Panc1 (cell line): ENCODE measurements at regions of chr17 and their contacts with region 1.

Region 1: DNA sequence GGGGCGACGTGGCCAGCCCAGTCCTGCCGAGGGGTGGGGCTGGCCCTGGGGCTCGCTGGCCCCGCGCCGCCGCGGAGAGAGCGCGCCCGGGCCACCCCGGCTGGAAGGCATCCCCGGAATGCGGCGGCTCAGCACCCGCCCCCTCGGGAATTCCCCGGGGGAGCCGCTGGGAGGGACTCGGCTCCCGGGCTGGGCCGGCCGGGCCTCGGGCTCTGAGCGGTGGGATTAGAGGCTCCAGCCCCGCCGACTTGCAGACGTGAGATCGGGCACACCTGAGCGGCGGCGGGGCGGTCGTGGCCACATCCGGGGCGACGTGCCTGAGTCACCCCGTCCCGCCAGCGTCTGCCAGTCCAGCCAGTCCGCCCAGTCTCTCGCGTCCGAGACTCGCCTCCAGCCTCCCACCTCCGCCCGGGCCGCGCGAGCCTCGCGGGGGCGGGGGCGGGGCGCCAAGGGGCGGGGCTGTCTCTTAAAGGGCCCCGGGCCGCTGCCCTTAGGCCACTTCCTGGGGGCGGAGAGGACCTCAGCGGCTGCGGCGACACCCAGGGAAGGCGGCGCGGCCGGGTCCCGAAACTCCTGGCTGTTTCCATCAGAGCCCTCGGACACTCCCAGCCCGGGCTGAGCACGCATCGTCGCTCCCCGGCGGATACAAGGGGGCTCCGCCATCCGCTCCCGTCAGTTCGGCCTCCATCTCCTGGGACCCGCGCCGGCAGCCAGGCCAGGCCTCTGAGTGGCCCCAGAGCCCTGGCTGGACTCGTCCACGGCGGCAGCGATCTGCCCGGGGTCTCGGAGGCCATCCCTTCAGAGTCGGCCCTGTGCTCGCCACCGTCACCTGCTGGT is at the start of gene KCTD11:
- DNase-seq: no peak
- ATAC-seq: peak; percentile 75
- H3K4me3 ChIP-seq: peak within 1 kb of the TSS; percentile 69 to 78
- H3K27ac ChIP-seq: peak within 1 kb of the TSS; percentile 92
- H3K4me1 ChIP-seq: peaks cover 9% of the 10 kb centered on the region
- H3K27me3 ChIP-seq: no peaks in the 10 kb centered on the region
- CTCF ChIP-seq: peak; percentile 86
- total RNA-seq, gene KCTD11: 11.0 TPM

Region 2: GRCh38 chr17:7060165-7060891 is 291.6 kb before region 1 on chr17:
- CTCF ChIA-PET with region 1: interaction called, 14 read pairs
- POLR2A ChIA-PET with region 1: no interaction called
- in situ Hi-C with region 1: no loop called
- intact Hi-C with region 1: no loop called
- DNase-seq: peak; percentile 99
- ATAC-seq: peak; percentile 90
- H3K4me3 ChIP-seq: peak overlapping the region in 1 of 2 experiments; percentile 20; a peak in 2 of 4 replicates
- H3K27ac ChIP-seq: peak overlapping the region; percentile 61
- H3K4me1 ChIP-seq: peaks cover 16% of the 10 kb centered on the region; the same call in 1 of the 2 replicates
- H3K27me3 ChIP-seq: no peaks in the 10 kb centered on the region
- CTCF ChIP-seq: no peak

Region 3: GRCh38 chr17:7435221-7435675 is 83.4 kb after region 1 on chr17 and contains the start of gene TMEM102:
- CTCF ChIA-PET with region 1: interaction called, 11 read pairs
- POLR2A ChIA-PET with region 1: interaction called, 4 read pairs
- in situ Hi-C with region 1: no loop called
- intact Hi-C with region 1: loop called (anchors 10 kb)
- DNase-seq: peak; percentile 99
- ATAC-seq: peak; percentile 82
- H3K4me3 ChIP-seq: peak within 1 kb of the TSS; percentile 64 to 80
- H3K27ac ChIP-seq: peak within 1 kb of the TSS; percentile 77
- H3K4me1 ChIP-seq: peaks cover 4% of the 10 kb centered on the region
- H3K27me3 ChIP-seq: no peaks in the 10 kb centered on the region
- CTCF ChIP-seq: no peak
- total RNA-seq, gene TMEM102: 8.5 TPM

Region 4: DNA sequence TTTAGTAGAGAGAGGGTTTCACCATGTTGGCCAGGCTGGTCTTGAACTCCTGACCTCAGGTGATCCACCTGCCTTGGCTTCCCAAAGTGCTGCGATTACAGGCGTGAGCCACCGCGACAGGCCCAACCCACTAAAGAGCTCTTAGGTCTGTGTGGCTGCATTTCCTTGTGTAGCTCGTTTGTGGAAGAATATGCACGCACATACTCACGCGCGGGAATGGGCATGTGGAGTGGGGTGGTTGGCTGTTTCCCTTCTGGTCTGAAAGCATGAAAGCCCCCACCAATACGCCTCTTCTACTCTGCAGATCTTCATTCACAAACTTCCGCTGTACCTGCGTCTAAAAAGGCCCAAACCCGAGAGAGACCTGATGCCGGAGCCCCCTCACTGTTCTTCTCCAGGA is 103.1 kb after region 1 on chr17:
- CTCF ChIA-PET with region 1: no interaction called
- POLR2A ChIA-PET with region 1: interaction called, 12 read pairs
- in situ Hi-C with region 1: no loop called
- intact Hi-C with region 1: no loop called
- DNase-seq: no peak
- ATAC-seq: no peak
- H3K4me3 ChIP-seq: peak overlapping the region; percentile 78 to 89
- H3K27ac ChIP-seq: no peak overlapping the region
- H3K4me1 ChIP-seq: no peaks in the 10 kb centered on the region
- H3K27me3 ChIP-seq: no peaks in the 10 kb centered on the region
- CTCF ChIP-seq: no peak

Region 5: DNA sequence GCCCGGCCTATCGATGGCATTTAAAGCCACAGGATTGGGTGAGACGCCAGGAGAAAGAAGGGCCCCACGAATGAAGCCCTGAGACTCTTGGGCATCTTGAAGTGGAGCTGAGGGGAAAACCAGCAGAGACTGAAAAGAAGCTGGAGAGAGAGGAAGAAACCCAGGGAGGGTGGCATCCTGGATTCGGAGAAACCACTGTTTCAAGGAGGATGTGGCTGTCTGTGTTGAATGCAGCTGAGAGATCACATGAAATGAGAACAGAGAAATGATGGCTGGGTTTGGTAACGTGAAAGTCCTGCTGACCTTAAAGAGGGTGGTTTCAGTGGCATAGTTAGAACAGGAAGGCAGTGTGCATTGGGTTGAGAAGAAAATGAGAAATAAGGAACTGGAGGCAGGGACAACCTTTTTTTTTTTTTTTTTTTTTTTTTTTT is 200.8 kb after region 1 on chr17:
- CTCF ChIA-PET with region 1: no interaction called
- POLR2A ChIA-PET with region 1: no interaction called
- in situ Hi-C with region 1: no loop called
- intact Hi-C with region 1: no loop called
- DNase-seq: no peak
- ATAC-seq: no peak
- H3K4me3 ChIP-seq: no peak overlapping the region
- H3K27ac ChIP-seq: no peak overlapping the region
- H3K4me1 ChIP-seq: peaks cover 8% of the 10 kb centered on the region
- H3K27me3 ChIP-seq: no peaks in the 10 kb centered on the region
- CTCF ChIP-seq: no peak